Posterior cingulate gyrus (tissue), 11 donors: ENCODE measurements at regions of chr7 and their contacts with region 1.

Region 1: DNA sequence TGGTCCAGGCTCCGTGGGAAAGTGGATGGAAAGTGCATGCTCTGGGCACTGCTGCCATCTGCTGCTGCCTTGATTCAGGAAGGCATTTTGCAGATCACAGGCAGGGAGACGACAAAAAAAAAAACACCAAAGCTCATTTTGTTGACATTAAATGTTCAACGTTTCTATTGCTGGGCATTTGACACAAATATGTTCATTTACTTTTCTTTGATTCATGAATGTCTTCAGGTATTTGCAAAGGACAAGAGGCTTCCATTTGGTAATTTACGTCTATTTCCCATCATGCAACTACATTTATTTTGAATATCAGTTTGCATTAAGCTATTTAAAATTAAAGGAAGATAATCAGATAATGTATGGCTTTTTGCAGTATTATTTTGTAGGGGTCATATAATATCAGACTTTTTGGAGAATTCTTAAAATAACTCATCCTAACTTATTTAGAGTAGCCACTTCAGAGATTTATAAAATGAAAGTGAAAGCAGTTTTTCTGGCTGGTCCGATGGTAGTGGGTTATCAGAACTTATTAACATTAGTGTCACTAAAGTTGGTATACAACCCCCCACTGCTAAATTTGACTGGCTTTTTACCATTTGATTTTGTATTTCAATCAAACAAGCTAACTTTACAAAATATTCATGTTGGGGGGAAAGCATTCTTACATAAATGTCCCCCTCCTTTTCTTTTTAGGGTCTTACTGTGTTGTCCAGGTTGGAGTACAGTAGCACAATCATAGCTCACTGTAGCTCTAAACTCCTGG is 65.3 kb downstream of the PDIA4 start:
- DNase-seq: peak; percentile 60 to 96 (median 74)

Region 2: DNA sequence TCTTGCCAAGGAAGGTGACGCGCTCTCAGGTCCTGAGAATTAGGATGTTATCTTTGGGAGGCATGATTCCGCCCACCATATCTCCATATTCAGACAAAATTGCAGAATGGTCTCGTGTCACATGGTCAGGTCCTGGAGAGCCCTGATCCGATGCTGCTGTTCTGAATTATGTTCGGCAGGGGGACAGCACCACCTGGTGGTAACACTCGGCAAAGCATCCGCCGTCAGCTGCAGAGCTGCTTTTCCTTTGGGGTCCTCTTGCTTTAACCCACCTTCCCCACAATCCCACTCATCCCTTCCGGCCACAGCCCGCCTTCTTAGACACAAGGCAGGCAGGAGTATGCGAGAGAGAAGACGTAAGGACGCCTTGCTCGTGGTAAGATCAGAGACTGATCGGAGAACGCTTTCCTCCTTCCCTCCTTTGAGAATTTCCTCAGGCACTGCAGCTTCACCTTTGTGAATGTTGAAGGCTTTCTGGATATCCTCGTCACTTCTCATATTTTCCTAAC is 700.2 kb before region 1 on chr7:
- intact Hi-C with region 1: loop called (anchors 5 kb)
- DNase-seq: peak; percentile 58 to 96 (median 84)

Region 3: GRCh38 chr7:148503875-148504487 is 459.0 kb before region 1 on chr7:
- intact Hi-C with region 1: loop called (anchors 1 kb)
- DNase-seq: no peak

Region 4: DNA sequence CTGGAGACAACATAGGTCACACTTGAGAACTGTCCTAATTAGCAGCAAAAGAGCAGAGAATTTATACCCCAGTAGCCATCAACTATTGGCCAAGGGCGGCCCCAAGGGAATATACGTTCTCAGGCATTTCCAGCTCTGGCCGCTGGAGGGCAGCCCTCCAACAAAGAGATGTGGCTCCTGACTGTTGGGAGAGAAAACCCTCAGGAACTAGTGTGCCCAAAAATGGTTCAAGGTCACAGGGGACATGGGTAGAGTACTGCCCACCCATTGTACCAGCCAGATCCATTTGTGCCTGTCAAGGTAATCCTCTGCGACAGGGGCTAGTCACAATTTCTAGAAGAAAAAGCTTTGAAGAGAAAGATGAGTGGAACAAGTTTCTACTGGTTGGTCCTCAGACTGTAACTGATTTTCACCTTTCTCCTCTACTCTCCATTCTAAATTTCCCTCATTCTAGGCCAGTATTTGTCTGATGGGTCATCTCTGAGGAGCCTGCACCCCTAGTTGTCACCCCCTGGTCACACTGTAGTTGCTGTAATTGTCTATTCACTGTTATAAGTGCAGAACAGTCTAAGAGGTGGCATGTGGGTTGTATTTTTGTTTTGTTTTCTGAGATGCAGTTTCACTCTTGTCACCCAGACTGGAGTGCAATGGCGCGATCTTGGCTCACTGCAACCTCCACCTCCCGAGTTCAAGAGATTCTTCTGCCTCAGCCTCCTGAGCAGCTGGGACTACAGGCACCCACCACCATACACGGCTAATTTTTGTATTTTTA is 387.2 kb before region 1 on chr7:
- intact Hi-C with region 1: loop called (anchors 1 kb)
- DNase-seq: peak; percentile 32 to 93 (median 74)

Region 5: DNA sequence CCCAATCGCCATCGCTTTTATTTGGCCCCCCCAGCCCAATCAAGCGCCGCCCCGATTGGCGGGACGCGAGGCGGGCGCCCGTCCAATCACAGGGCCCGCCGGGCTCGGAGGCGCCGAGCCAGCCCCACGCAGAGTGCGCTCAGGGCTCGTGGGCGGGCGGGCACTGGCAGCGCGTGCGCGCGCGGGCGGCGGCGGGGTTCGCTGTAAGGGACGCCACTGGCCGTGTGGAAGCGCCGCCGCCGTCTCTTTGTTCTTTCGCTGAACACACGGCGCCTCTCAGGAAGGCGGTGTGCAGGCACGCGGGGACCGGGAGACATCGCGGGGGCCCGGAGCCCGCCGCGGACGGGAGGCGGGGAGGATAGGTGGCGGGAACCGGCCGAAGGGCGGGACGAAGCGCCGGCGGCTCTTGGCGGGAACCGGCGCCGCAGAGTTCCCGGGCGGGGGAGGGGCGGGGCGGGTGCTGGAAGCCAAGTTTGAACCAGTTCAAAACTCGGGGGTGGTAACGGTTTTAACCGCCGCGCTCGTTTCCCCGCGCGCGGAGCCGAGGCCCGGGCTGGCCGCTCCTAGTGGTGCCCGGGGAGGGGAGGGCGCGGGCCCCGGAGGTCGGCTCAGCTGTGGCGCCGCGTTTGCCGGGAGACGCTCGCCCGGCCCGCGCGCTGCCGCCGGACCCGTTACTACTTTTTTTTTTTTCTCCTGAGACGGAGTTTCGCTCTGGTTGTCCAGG is 78.5 kb before region 1 on chr7:
- intact Hi-C with region 1: loop called (anchors 5 kb)
- DNase-seq: peak; percentile 86 to 99 (median 92)

Region 6: DNA sequence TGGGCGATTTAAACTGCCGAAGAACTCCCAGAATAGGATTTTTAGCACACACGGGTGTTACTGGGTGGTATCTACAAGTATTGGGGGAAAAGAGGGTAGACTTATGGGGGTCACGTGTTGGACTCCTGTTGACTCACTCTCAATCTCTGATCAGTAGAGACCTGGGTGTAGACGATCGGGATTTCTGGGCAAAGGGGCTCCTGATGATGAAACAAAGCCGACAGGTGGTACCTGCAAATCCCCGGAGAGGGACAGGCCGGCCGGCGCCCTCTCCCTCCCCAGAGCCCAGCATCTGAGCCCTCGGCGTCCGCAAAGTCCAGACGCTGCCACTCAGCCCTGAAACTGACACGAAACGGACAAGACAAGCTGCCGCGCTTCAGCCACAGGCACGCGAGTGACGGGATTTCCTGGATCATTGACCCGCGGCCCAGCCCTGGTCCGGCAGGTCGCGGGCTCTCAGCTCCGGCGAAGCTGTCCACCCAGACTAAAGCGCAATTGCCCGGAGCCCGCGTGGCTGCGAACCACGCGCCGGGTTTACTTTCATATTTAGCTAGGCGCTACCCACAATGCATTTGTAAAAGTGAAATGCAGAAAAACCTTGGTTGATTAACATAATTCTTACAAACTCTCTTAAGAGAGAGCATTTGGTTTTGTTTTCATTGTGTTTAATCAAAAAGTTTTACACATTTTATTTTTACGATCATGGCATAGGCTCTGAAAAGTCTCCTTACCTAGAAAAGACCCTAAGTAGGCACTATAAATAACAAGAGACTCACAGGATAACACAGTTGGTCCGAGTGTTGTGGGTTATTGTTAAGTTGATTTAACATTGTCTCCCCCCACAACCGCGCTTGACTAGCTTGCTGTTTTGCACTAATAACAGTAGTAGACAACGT is 22.1 kb before region 1 on chr7:
- intact Hi-C with region 1: loop called (anchors 1 kb)
- DNase-seq: peak; percentile 49 to 95 (median 64)

Region 7: DNA sequence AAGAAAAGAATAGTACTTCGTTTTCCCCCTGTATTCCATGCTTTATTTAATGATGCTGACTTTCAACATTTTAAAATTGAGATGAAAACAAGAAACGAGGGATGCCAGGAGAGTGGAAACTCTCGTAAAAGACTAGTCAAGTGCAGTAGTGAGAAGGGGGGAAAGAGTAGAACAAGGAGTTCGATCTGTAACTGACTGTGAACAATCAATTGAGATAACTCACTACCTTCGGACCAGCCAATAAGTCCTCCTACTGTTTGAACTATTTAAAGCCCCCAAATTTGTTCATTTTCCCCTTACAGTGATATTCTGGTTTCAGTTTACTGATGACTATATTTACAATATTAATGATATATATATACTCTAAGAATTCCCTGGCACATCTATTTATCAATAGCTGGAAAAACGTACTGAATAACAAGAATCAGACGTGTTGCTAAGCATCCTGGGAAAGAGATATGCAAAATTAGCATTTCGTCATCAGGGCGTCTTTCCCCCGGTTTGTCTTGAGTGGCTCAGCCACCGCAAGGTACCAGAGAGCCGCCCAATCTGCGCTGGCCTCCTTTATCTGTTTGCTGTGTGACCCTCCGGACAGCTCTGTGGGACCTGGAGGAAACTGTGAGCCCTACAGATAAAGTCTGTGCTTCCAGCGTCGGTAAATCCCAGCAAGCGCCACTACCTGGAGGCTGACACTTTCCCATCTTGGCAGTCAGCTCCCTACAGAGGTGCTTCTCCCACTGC is 24.2 kb after region 1 on chr7:
- intact Hi-C with region 1: loop called (anchors 2 kb)
- DNase-seq: peak; percentile 57 to 96 (median 78)

Region 8: DNA sequence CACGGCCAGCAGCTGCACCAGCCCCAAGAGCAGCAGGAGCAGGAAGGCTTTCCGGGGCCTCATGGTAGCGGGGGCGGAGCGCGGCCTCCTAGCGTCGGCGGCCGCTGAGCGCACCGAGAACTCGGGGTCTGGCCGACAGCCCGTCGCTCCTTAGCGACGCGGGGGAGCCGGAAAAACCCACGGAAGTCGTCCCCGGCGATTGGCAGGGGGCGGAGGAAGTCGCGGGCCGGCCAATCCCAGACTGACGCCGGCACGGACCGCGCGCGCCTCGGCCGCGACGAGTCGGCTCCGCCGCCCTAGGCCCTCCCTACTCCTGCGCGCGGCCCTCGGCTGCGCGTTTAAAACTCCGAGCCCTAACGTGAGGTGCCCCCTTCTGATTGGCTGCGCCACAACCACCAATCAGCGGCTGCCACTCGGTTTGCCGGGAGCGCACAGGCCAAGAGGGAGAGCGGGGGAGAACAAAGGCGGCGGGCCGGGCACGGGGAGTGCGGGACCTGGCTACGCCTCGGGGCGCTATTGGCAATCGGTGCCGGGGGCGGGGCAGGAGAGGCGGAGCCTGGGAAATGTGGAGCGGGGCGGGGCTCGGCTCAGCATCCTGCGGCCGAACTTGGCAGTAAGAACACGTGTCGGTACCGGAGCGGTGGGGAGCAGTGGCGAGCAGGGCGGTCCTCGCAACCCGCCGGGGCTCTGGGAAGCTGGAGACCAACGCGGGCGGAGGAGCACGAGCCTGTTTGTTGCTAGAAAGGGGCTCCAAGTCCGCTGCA is 65.5 kb after region 1 on chr7 and contains the start of gene PDIA4:
- intact Hi-C with region 1: no loop called
- DNase-seq: peak; percentile 99 to 100 (median 100)

Region 9: GRCh38 chr7:149460493-149461277 is 497.7 kb after region 1 on chr7 and contains the start of gene ZNF777:
- intact Hi-C with region 1: no loop called
- DNase-seq: peak; percentile 59 to 97 (median 80)